OCI-LY7 (cell line): ENCODE measurements at regions of chr12 and their contacts with region 1.

Region 1: DNA sequence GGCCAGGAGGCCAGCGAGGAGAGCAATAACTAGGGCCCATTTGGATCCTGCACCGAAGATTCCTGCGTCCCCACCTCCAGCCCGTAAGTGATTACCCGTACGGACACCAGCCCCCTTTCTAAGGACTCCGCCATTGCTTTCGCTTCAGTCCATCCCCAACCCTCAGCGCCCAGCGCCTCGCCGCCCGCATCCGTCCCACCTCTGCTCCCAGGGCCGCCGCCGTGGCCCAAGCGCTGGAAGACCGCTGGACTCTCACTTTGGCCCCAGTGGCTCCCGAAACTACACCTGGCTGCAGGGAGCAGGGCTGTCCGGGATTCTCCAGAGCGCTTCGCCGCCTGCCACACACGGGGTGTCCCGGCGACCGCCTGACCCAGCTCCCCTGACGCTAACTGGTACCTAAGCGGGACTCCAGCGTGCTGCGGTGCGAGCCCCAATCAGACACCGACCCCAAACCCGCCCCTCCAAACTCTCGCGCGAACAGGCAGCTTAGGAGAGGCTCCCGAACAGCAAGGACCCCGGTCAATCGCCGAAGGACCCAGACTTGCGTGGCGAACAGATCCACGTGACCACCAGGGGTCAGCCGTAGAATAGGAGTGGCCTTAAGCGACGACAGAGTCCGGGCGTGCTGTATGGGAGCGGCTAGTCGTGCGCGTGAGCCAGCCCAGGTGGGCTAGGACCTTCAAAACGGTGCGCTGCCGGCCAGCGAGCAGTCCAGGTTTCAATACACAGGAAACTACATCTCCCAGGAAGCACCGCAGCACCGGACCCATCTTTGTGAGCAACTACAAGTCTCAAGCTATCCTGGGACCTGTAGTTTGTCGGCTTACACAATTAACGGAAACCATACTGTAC is at the start of gene CNPY2:
- DNase-seq: peak; percentile 96
- H3K4me3 ChIP-seq: peak within 1 kb of the TSS; percentile 83
- H3K27ac ChIP-seq: peak within 1 kb of the TSS; percentile 60
- H3K4me1 ChIP-seq: peaks cover 14% of the 10 kb centered on the region
- CTCF ChIP-seq: peak; percentile 48; the same call in 1 of the 2 replicates
- total RNA-seq, gene CNPY2: 62.8 and 75.5 TPM in 2 replicates

Region 2: GRCh38 chr12:56299853-56300643 is 15.8 kb before region 1 on chr12 and contains the start of gene CS:
- CTCF ChIA-PET with region 1: interaction called, 12 read pairs
- POLR2A ChIA-PET with region 1: interaction called, 3 read pairs
- intact Hi-C with region 1: no loop called
- DNase-seq: peak; percentile 100
- H3K4me3 ChIP-seq: peak within 1 kb of the TSS; percentile 79
- H3K27ac ChIP-seq: peak within 1 kb of the TSS; percentile 75
- H3K4me1 ChIP-seq: peaks cover 62% of the 10 kb centered on the region
- CTCF ChIP-seq: no peak
- total RNA-seq, gene CS: 150 and 154 TPM in 2 replicates

Region 3: GRCh38 chr12:56461235-56462159 is 145.6 kb after region 1 on chr12:
- CTCF ChIA-PET with region 1: interaction called, 10 read pairs
- POLR2A ChIA-PET with region 1: interaction called, 17 read pairs
- intact Hi-C with region 1: loop called (anchors 1 kb)
- DNase-seq: no peak
- H3K4me3 ChIP-seq: no peak overlapping the region
- H3K27ac ChIP-seq: peak overlapping the region; percentile 96
- H3K4me1 ChIP-seq: peaks cover 49% of the 10 kb centered on the region
- CTCF ChIP-seq: no peak

Region 4: GRCh38 chr12:56468216-56469006 is 152.6 kb after region 1 on chr12 and contains the start of gene SPRYD4:
- CTCF ChIA-PET with region 1: interaction called, 10 read pairs
- POLR2A ChIA-PET with region 1: interaction called, 17 read pairs
- intact Hi-C with region 1: loop called (anchors 1 kb)
- DNase-seq: peak; percentile 97
- H3K4me3 ChIP-seq: peak within 1 kb of the TSS; percentile 89
- H3K27ac ChIP-seq: peak within 1 kb of the TSS; percentile 76
- H3K4me1 ChIP-seq: peaks cover 22% of the 10 kb centered on the region
- CTCF ChIP-seq: peak; percentile 75
- total RNA-seq, gene SPRYD4: 5.3 and 5.9 TPM in 2 replicates